HEK293T (cell line): ENCODE measurements at regions of chr10 and their contacts with region 1.

Region 1: GRCh38 chr10:23376229-23376655 is 31.6 kb upstream of the C10orf67 start:
- DNase-seq: no peak

Region 2: DNA sequence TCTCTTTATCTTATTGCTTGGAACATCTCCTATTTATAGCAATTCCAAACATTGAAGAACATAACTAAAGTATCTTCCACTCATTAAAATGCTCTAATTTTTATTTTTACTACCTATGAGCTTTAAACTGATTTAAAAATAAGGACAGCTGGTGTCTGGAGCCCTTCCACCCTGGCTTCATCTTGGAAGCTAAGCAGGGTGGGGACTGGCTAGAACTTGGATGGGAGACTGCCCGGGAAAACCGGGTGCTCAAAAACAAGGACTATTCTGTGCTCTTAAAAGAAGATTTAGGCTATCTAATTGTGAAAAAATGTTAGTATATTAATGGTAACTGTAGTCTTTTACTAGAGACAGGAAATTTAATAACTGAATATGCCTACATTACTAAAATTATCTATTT is 379.1 kb before region 1 on chr10:
- CTCF ChIA-PET with region 1: no interaction called
- POLR2A ChIA-PET with region 1: no interaction called
- DNase-seq: peak; percentile 15

Region 3: DNA sequence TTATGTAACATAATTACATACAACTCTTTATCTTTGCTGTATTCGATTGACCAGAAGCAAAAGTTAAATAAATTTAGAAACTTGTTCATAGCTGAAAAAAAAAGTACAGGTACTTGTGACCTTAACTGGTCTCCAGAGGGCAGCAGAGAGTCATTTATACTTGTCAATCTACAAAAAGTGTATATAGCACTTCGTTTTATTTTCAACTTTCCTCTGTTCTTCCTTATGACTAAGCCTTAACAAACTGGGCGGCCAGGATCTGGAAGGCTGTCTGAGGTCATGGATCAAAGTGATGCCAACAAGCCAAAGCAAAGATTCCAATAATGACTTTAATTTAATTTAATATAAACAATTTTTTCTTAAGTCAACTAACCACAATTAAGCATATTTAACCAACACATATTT is 61.4 kb before region 1 on chr10:
- CTCF ChIA-PET with region 1: no interaction called
- POLR2A ChIA-PET with region 1: no interaction called
- DNase-seq: peak; percentile 30

Region 4: GRCh38 chr10:23396695-23397094 is 20.5 kb after region 1 on chr10:
- CTCF ChIA-PET with region 1: interaction called, 11 read pairs
- POLR2A ChIA-PET with region 1: no interaction called
- DNase-seq: no peak

Region 5: GRCh38 chr10:23448802-23449570 is 72.7 kb after region 1 on chr10:
- CTCF ChIA-PET with region 1: no interaction called
- POLR2A ChIA-PET with region 1: no interaction called
- DNase-seq: no peak